Cardiac septum (tissue), 1 donor: ENCODE measurements at regions of chr6 and their contacts with region 1.

Region 1: GRCh38 chr6:52233975-52234823 is 10.1 kb downstream of the IL17F start:
- DNase-seq: no peak

Region 2: GRCh38 chr6:52077180-52077884 is 156.9 kb before region 1 on chr6:
- intact Hi-C with region 1: no loop called
- DNase-seq: no peak

Region 3: GRCh38 chr6:52108128-52108527 is 126.1 kb before region 1 on chr6:
- intact Hi-C with region 1: loop called (anchors 10 kb)
- DNase-seq: no peak

Region 4: GRCh38 chr6:52162940-52163908 is 71.0 kb before region 1 on chr6:
- intact Hi-C with region 1: loop called (anchors 5 kb)
- DNase-seq: no peak

Region 5: DNA sequence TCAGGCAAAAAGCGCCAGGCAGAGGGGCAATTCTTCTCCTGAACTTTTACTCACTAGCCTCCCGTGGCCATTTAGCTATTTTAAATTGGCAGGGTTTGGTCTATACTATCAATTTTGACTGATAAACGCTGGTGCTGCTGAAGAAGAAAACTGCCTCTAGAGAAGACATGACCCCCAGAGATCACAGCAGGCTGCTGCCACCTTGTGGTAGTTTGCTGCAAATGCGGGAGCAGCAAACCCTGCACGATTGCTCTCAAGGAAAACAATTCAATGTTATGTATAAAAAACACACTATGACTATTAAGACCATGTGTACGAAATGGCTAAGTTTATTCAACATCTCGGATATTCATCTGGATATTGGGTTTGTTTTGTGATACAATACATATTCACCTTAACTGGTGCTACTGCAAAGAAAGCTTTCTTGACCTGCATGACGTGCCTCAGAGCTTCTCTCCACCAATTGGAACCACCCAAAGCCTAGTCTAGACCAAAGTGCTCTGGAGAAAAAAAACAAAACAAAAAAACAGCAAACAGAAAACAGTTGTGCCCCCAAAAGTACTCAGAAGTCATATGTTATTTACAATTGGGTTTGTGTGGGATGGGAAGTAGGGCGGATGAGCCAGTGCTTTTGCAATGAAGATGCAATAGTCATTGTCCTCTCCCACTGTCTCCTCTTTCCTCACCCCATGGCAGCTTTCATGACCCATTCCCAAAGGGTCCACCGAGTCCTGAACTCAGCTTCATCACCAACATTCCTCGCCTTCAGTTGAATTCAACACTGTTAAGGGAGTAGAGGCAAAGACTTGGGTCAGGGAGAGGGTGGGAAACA is 29.7 kb after region 1 on chr6:
- intact Hi-C with region 1: no loop called
- DNase-seq: no peak